ENCODE measurements at regions of chr6 and their contacts with region 1.

Region 1: GRCh38 chr6:2952557-2953095 is 18.7 kb downstream of the SERPINB6 start:
- DNase-seq: peak; percentile 74 to 80 (median 78)
- ATAC-seq: peak; percentile 89
- H3K4me3 ChIP-seq: no peak overlapping the region
- H3K27ac ChIP-seq: peak overlapping the region; percentile 17; the same call in 1 of the 3 replicates
- H3K4me1 ChIP-seq: peaks cover 25 to 26% of the 10 kb centered on the region in 2 experiments
- H3K27me3 ChIP-seq: no peaks in the 10 kb centered on the region
- CTCF ChIP-seq: peak; percentile 98 to 100 (median 99)
- EP300 ChIP-seq: no peak
- POLR2A ChIP-seq: no peak
- RAD21 ChIP-seq: peak; percentile 90 to 96

Region 2: GRCh38 chr6:2285510-2285909 is 667.1 kb before region 1 on chr6:
- CTCF ChIA-PET with region 1: no interaction called
- POLR2A ChIA-PET with region 1: no interaction called
- in situ Hi-C with region 1: no loop called
- intact Hi-C with region 1: no loop called
- DNase-seq: no peak
- ATAC-seq: no peak
- H3K4me3 ChIP-seq: no peak overlapping the region
- H3K27ac ChIP-seq: no peak overlapping the region
- H3K4me1 ChIP-seq: no peaks in the 10 kb centered on the region
- H3K27me3 ChIP-seq: no peaks in the 10 kb centered on the region
- CTCF ChIP-seq: no peak
- EP300 ChIP-seq: no peak
- POLR2A ChIP-seq: no peak
- RAD21 ChIP-seq: no peak

Region 3: GRCh38 chr6:2579241-2579761 is 373.3 kb before region 1 on chr6:
- CTCF ChIA-PET with region 1: no interaction called
- POLR2A ChIA-PET with region 1: no interaction called
- in situ Hi-C with region 1: no loop called
- intact Hi-C with region 1: no loop called
- DNase-seq: no peak
- ATAC-seq: peak; percentile 21; the same call in 1 of the 3 replicates
- H3K4me3 ChIP-seq: no peak overlapping the region
- H3K27ac ChIP-seq: no peak overlapping the region
- H3K4me1 ChIP-seq: no peaks in the 10 kb centered on the region; a peak in 1 of 5 replicates
- H3K27me3 ChIP-seq: peaks cover 11 to 30% of the 10 kb centered on the region in 2 experiments; a peak in 4 of 5 replicates
- CTCF ChIP-seq: no peak
- EP300 ChIP-seq: no peak
- POLR2A ChIP-seq: no peak
- RAD21 ChIP-seq: no peak

Region 4: DNA sequence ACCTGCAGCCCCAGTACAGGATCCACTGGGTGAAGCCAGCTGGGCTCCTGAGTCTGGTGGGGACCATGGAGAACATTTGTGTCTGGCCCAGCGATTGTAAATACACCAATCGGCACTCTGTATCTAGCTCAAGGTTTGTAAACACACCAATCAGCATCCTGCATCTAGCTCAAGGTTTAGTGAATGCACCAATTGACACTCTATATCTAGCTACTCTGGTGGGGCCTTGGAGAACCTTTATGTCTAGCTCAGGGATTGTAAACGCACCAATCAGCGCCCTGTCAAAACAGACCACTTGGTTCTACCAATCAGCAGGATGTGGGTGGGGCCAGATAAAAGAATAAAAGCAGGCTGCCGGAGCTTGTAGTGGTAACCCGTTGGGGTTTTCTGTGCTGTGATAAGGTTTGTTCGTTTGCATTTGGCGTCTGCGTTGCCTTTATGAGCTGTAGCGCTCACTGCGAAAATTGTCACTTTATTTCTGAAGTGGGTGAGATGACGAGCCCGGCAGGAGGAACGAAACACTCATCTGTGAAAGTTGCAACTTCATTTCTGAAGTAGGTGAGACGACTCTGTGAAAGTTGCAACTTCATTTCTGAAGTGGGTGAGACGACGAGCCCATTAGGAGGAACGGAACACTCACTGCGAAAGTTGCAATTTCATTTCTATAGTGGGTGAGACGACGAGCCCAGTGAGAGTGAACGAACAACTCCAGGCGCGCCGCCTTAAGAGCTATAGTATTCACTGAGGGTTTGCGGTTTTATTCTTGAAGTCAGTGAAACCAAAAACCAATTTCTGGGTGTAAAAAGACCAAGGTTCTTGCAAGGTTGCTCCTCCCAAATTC is 12.4 kb before region 1 on chr6:
- CTCF ChIA-PET with region 1: interaction called, 3 read pairs
- POLR2A ChIA-PET with region 1: interaction called, 15 read pairs
- in situ Hi-C with region 1: no loop called
- intact Hi-C with region 1: no loop called
- DNase-seq: no peak
- ATAC-seq: no peak; the same call in 2 of the 3 replicates
- H3K4me3 ChIP-seq: no peak overlapping the region
- H3K27ac ChIP-seq: no peak overlapping the region
- H3K4me1 ChIP-seq: peaks cover 20 to 26% of the 10 kb centered on the region in 2 experiments
- H3K27me3 ChIP-seq: no peaks in the 10 kb centered on the region
- CTCF ChIP-seq: no peak
- EP300 ChIP-seq: no peak
- POLR2A ChIP-seq: peak; percentile 79
- RAD21 ChIP-seq: no peak

Region 5: DNA sequence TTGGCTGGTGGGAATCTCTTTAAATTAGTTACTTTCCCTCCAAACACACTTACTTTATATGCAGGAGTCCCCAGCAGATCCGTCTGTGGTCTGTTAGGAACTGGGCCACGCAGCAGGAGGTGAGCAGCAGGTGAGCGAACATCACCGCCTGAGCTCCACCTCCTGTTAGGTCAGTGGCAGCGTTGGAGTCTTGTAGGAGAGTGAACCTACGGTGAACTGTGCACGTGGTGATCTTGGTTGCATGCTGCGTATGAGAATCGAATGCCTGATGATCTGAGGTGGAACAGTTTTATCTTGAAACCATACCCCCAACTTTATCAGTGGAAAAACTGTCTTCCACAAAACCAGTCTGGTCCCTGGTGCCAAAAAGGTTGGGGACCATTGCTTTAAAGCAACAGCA is 13.7 kb after region 1 on chr6:
- CTCF ChIA-PET with region 1: interaction called, 3 read pairs
- POLR2A ChIA-PET with region 1: interaction called, 12 read pairs
- in situ Hi-C with region 1: no loop called
- intact Hi-C with region 1: no loop called
- DNase-seq: peak in 1 of 4 experiments; percentile 81
- ATAC-seq: peak; percentile 39
- H3K4me3 ChIP-seq: no peak overlapping the region
- H3K27ac ChIP-seq: peak overlapping the region; percentile 61
- H3K4me1 ChIP-seq: peaks cover 47 to 66% of the 10 kb centered on the region in 2 experiments
- H3K27me3 ChIP-seq: no peaks in the 10 kb centered on the region
- CTCF ChIP-seq: no peak
- EP300 ChIP-seq: peak; percentile 28
- POLR2A ChIP-seq: no peak
- RAD21 ChIP-seq: no peak